ENCODE measurements at regions of chr6 and their contacts with region 1.

Region 1: DNA sequence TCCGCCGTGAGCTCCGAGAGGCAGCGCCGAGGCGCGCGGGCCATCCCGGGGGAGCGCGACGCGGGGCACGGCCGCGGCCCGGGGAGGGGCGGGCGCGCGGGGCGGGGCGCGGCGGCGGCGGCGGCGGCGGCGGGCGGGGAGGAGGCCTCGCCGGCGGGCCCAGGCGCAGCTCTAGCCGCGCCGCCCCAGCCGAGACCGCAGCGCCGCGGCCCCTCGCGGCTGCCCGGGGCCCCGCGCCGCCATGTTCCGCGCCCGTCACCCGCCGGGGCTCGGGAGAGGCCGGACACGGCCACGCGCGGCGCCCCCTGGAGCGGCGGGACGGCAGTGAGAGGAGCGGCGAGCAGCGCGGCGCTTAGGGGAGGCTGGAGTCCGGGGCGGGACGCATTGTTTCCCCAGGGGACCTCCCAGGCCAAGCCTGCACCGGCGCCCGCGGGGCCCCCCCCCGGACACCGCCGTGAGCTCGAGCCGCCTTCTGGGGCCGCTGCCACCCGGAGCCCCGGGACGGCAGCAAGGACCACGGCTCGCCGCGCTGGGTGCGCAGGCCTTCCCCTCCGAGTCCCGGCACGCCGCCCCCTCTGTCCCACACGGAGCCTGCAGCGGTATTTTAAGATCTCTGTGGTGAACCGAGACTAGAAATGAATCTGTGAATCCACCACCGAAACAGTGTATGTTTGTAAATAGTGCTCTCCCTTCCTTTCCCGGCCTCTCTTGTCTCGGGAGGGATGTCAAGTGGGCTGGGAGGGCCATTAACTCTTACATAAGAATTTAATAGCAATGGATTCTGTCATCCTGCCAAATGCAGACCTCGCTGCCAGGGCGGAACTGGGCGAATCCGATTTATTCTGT is at the start of gene KIF13A:
- DNase-seq: peak; percentile 75 to 89
- ATAC-seq: peak; percentile 76 to 85 (median 80)
- H3K4me3 ChIP-seq: peak within 1 kb of the TSS; percentile 87
- H3K27ac ChIP-seq: peak within 1 kb of the TSS; percentile 97
- H3K4me1 ChIP-seq: peaks cover 15% of the 10 kb centered on the region
- H3K27me3 ChIP-seq: no peaks in the 10 kb centered on the region
- CTCF ChIP-seq: peak; percentile 36
- total RNA-seq, gene KIF13A: 62.0 to 80.2 (median 75.0) TPM

Region 2: DNA sequence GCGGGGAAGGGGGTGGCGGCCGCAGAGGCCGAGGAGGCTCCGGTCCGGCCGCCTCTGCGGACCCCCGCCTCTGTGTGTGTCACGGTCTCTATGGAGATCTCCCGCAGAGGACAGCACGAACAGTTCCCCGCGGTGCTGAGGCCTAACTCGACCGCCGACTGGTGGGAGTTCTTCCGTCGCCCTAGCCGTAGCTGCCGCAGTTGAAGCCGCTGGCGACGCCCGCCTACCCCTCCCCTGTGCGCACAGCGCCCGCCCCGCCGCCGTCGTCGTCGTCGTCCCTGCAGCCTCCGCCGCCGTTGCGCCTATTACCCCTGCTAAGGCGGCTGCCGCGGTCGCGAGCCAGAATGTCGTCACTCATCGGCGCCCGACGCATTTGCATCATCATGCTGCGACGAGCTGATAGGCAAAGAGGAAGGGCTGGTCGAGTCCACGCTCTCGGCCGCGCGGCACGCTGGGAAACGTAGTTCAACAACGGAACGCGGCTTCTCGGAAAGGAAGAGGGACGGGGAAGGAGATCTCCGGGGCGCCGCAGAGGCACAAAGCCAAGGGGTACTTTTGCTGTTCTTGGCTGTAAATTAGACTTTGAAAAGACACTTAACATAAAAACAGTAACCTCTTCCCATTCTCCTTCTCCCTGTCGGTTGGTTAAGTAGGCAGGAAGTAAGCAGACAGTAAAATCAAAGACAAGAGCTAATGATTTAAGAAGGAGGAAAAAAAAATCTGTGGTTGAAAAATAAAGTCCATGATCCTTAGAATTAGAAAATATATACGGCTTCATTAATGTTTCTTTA is 281.0 kb before region 1 on chr6 and contains the start of gene NUP153:
- intact Hi-C with region 1: loop called in 1 of 2 experiments (anchors 5 kb)
- DNase-seq: peak; percentile 98 to 99
- ATAC-seq: peak; percentile 81 to 86 (median 84)
- H3K4me3 ChIP-seq: peak within 1 kb of the TSS; percentile 99
- H3K27ac ChIP-seq: peak within 1 kb of the TSS; percentile 100
- H3K4me1 ChIP-seq: peaks cover 33% of the 10 kb centered on the region
- H3K27me3 ChIP-seq: no peaks in the 10 kb centered on the region
- CTCF ChIP-seq: no peak
- total RNA-seq, gene NUP153: 27.6 to 62.1 (median 39.1) TPM

Region 3: GRCh38 chr6:17831135-17831534 is 156.7 kb before region 1 on chr6:
- intact Hi-C with region 1: loop called in 1 of 2 experiments (anchors 5 kb)
- DNase-seq: no peak
- ATAC-seq: peak; percentile 48 to 79 (median 75)
- H3K4me3 ChIP-seq: no peak overlapping the region
- H3K27ac ChIP-seq: no peak overlapping the region
- H3K4me1 ChIP-seq: no peaks in the 10 kb centered on the region
- H3K27me3 ChIP-seq: no peaks in the 10 kb centered on the region
- CTCF ChIP-seq: no peak

Region 4: GRCh38 chr6:17865798-17866725 is 121.7 kb before region 1 on chr6:
- intact Hi-C with region 1: loop called (anchors 5 to 10 kb)
- DNase-seq: peak; percentile 80 to 88
- ATAC-seq: peak; percentile 94 to 99 (median 97)
- H3K4me3 ChIP-seq: no peak overlapping the region
- H3K27ac ChIP-seq: peak overlapping the region; percentile 86
- H3K4me1 ChIP-seq: peaks cover 58% of the 10 kb centered on the region
- H3K27me3 ChIP-seq: no peaks in the 10 kb centered on the region
- CTCF ChIP-seq: no peak

Region 5: GRCh38 chr6:17907406-17908229 is 80.2 kb before region 1 on chr6:
- intact Hi-C with region 1: loop called in 1 of 2 experiments (anchors 5 kb)
- DNase-seq: peak; percentile 80 to 90
- ATAC-seq: peak; percentile 94 to 98 (median 95)
- H3K4me3 ChIP-seq: peak overlapping the region; percentile 33
- H3K27ac ChIP-seq: peak overlapping the region; percentile 91
- H3K4me1 ChIP-seq: peaks cover 75% of the 10 kb centered on the region
- H3K27me3 ChIP-seq: no peaks in the 10 kb centered on the region
- CTCF ChIP-seq: peak; percentile 28

Region 6: DNA sequence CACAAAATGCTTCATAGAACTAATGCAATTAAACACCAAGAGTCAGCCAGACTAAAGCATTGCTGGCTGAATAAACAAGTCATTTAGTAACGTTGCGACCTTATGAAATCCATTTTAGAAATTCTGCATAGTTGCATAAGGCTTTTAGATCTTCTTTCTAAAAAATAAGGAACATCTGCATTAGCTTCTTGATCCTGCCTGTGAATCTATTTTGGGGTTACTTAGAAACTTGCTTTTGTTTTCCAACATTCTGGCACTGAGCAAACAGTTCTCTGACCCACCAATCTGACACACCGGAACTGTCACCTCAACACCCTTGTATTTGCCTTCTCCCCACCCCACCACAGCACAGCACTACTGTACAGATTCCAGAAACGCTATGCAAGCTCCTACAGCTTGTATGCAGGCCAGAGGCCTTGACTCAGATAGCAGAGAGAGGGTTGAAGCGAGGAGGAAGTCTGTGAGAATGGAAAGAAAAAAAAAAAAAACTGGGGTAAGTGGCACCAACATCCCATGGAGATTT is 55.4 kb before region 1 on chr6:
- intact Hi-C with region 1: loop called in 1 of 2 experiments (anchors 5 kb)
- DNase-seq: peak in 1 of 2 donors; percentile 41
- ATAC-seq: peak; percentile 71 to 94 (median 86)
- H3K4me3 ChIP-seq: no peak overlapping the region
- H3K27ac ChIP-seq: peak overlapping the region; percentile 76
- H3K4me1 ChIP-seq: peaks cover 86% of the 10 kb centered on the region
- H3K27me3 ChIP-seq: no peaks in the 10 kb centered on the region
- CTCF ChIP-seq: no peak

Region 7: GRCh38 chr6:18122124-18123093 is 134.6 kb after region 1 on chr6 and contains the start of gene NHLRC1:
- intact Hi-C with region 1: loop called (anchors 2 to 5 kb)
- DNase-seq: peak; percentile 92 to 95
- ATAC-seq: peak; percentile 99 to 100 (median 99)
- H3K4me3 ChIP-seq: peak within 1 kb of the TSS; percentile 73
- H3K27ac ChIP-seq: peak within 1 kb of the TSS; percentile 77
- H3K4me1 ChIP-seq: peaks cover 12% of the 10 kb centered on the region
- H3K27me3 ChIP-seq: no peaks in the 10 kb centered on the region
- CTCF ChIP-seq: peak; percentile 98
- total RNA-seq, gene NHLRC1: 0.84 to 3.0 (median 1.6) TPM

Measured in psoas muscle (tissue), 8 donors.